ENCODE measurements at regions of chr2 and their contacts with region 1.

Region 1: GRCh38 chr2:221767106-221768012 is 195.3 kb upstream of the EPHA4 start:
- DNase-seq: no peak
- H3K4me3 ChIP-seq: no peak overlapping the region
- CTCF ChIP-seq: no peak

Region 2: GRCh38 chr2:221705185-221705877 is 62.0 kb before region 1 on chr2:
- in situ Hi-C with region 1: loop called (anchors 5 kb)
- DNase-seq: no peak
- H3K4me3 ChIP-seq: no peak overlapping the region
- CTCF ChIP-seq: no peak